ENCODE measurements at regions of chr11 and their contacts with region 1.

Region 1: DNA sequence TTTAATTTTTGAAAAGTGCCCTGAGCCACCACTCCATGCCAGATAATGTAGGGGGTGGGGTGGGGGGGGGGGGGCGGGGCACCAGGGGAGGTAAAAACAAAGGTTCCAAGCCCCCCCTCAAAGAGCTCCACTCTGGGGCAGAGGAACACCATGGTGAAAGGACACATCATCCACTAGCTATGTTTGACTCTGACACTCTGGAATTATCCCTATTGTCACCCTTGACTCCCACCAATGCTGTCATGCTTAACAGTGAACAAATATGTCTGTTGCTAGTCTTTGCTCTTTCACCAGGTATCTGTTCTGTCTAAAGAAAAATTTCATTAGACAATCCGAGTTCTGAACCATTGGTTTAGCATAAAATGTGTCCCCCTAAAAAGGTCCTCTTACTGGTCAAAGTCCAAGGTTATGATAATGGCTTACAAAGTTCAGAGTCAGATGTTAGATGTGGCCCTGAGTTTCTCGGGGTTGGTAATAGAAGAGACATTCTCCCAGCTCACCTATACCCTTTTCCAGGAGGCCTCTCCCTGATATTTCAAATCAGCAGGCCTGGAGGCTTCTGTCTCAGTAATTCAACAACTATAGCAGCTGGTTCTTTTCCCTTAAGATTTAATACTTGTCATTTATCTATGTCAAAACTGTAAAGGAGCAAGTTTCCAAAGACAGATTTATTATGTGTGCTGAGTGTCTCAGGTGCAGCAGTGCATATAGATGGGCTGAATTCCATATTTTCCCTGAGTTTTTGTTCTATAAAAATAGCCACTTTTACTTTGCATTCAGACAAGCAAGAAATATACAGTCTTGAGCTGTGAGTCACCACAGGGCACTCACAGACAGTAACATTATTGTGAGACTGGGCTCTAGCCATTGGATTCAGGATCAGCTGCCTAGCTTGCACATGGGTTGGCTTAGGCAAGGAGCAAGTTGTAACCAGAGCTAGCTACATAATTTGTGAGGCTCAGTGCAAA is 174.1 kb downstream of the CSNK2A3 start:
- DNase-seq: peak; percentile 73
- ATAC-seq: peak; percentile 99
- H3K4me3 ChIP-seq: no peak overlapping the region
- H3K27ac ChIP-seq: no peak overlapping the region
- H3K4me1 ChIP-seq: 0 out of 2 replicates have a peak, but pooled peaks cover 6% of the 10 kb centered on the region
- H3K27me3 ChIP-seq: peaks cover 19% of the 10 kb centered on the region
- CTCF ChIP-seq: no peak

Region 2: DNA sequence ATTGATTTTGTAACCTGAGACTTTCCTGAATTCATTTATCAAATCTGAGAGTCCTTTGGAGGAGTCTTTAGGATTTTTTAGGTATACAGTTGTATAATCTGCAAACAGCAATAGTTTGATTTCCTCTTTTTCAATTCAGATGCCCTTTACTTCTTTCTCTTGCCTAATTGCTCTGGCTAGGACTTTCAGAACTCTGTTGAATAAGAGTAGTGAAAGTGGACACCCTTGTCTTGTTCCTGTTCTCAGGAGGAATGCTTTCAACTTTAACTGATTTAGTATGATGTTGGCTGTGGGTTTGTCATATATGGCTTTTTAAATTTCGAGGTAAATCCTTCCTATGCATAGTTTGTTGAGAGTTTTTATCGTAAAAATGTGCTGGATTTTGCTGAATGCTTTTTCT is 53.3 kb before region 1 on chr11:
- CTCF ChIA-PET with region 1: no interaction called
- POLR2A ChIA-PET with region 1: no interaction called
- intact Hi-C with region 1: loop called (anchors 1 kb)
- DNase-seq: no peak
- ATAC-seq: no peak
- H3K4me3 ChIP-seq: no peak overlapping the region
- H3K27ac ChIP-seq: no peak overlapping the region
- H3K4me1 ChIP-seq: no peaks in the 10 kb centered on the region
- H3K27me3 ChIP-seq: peaks cover 68% of the 10 kb centered on the region
- CTCF ChIP-seq: no peak

Region 3: DNA sequence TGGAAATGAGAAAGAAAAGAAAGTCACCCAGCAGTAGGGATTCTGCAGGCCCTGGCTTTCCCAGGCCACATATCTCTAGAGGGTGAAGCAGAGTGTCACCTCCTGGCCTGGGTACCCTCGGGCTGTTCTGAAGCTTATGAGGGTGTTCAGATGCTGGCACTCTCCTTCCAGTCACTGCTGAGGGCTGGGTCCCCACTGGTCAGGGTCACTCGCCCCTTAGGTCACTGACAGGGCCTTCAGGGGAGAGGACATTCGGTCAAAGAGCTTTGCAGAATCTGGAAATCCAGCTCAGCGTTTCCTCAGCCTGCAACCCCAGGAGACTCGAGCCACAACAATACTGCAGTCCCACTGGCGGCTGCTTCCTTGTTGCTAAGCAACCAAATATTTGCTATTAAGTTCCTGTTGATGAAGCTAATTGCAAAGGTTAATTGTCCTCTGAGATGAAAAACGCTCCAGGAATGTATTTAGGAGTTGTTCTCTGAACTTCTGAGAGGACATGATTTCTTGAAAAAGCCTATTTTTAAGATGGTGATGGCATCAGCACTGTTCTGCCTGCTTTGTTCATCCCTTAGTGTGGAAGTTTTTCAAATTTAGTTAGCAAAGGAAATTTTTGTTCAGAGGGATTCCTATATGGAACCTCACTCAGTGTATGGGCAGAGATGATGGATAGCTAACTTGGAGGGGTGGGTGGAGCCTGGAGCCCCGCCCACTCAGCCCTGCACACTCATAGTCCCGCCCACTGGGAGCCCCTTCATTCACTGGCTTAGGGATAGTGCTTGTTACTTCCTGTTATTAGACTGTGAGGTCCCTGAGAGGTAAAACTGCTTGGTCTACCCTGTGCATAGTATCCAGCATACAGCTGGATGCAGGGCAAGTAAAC is 64.9 kb after region 1 on chr11:
- CTCF ChIA-PET with region 1: no interaction called
- POLR2A ChIA-PET with region 1: no interaction called
- intact Hi-C with region 1: no loop called
- DNase-seq: no peak
- ATAC-seq: no peak
- H3K4me3 ChIP-seq: no peak overlapping the region
- H3K27ac ChIP-seq: no peak overlapping the region
- H3K4me1 ChIP-seq: no peaks in the 10 kb centered on the region
- H3K27me3 ChIP-seq: no peaks in the 10 kb centered on the region
- CTCF ChIP-seq: no peak